IMR-90 (cell line): ENCODE measurements at regions of chr21 and their contacts with region 1.

Region 1: DNA sequence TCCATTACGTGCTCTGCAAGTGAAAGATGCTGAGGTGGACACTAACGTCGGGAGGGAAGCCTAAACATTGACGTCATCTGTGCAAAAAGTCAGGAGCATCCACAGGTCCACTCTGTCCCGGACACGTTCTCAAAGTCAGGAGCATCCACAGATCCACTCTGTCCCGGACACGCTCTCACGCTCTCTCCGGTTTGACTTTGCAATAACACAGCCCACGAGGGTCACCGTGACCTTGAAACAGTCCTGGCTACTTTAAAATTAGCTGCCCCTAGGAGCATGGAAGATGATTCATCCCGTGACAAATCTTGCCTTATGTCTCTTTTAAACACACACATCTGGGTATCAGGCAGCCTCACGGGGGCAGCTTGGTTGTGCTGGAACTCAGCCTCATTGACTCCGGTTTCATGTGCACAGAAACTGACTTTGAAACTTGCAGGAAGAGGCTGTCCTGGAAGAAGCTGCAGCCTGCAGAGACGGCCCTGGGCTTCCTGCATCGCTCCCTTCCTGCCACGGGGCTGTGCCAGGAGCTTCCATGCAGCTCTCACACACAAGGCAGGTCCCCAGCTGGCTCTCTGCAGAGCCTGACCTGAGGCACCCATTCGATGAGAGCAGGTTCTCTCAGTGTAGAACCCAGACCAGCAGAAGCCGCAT is 18.1 kb upstream of the COL18A1 start:
- DNase-seq: peak; percentile 97
- ATAC-seq: peak; percentile 95
- H3K4me3 ChIP-seq: no peak overlapping the region
- H3K27ac ChIP-seq: peak overlapping the region; percentile 57
- H3K4me1 ChIP-seq: peaks cover 18% of the 10 kb centered on the region
- H3K27me3 ChIP-seq: no peaks in the 10 kb centered on the region
- CTCF ChIP-seq: peak; percentile 47
- POLR2A ChIP-seq: peak; percentile 64
- RAD21 ChIP-seq: peak; percentile 47; the same call in 1 of the 2 replicates

Region 2: DNA sequence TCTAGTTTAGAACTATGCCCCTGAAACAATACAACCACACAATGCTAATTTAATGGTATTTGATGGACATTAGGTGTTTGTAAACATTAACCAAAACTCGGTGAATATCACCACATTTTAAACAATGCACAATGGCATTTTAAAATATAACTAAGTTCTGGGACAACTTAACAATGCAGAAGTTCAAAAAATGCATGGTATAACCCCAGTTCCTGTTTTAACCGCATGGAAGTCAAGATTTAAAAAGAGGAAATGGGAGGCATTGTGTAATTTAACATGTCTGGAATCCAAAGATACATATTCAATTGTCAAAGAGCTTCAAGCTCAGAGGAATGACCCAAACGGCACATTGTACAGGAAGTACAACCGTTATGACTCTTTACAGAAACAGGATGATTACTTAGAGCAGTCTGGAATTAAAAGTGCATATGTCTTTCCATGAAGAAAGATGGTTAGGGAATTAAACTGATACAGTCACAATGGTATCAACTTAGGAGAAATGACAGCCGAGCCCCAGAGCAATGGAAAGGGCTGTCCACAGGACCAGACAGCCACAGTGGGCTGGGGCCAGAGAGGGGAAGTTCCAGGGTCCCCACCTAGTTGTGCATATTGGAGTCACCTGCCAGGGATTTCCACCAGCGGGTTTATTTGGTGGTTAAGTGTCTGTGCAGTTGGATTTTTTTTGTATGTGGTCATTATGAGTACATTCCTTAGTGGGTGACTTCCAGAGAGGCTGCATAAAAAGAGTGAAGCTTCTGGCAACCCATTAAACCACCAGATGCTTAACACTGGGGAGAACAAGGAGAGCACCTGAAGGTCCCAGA is 505.9 kb before region 1 on chr21:
- CTCF ChIA-PET with region 1: no interaction called
- POLR2A ChIA-PET with region 1: no interaction called
- dilution Hi-C with region 1: no loop called
- in situ Hi-C with region 1: no loop called
- intact Hi-C with region 1: no loop called
- DNase-seq: peak; percentile 71
- ATAC-seq: peak; percentile 82
- H3K4me3 ChIP-seq: no peak overlapping the region
- H3K27ac ChIP-seq: no peak overlapping the region; the same call in 1 of the 2 replicates
- H3K4me1 ChIP-seq: peaks cover 6% of the 10 kb centered on the region
- H3K27me3 ChIP-seq: peaks cover 3% of the 10 kb centered on the region; the same call in 1 of the 2 replicates
- CTCF ChIP-seq: no peak
- POLR2A ChIP-seq: no peak
- RAD21 ChIP-seq: no peak

Region 3: DNA sequence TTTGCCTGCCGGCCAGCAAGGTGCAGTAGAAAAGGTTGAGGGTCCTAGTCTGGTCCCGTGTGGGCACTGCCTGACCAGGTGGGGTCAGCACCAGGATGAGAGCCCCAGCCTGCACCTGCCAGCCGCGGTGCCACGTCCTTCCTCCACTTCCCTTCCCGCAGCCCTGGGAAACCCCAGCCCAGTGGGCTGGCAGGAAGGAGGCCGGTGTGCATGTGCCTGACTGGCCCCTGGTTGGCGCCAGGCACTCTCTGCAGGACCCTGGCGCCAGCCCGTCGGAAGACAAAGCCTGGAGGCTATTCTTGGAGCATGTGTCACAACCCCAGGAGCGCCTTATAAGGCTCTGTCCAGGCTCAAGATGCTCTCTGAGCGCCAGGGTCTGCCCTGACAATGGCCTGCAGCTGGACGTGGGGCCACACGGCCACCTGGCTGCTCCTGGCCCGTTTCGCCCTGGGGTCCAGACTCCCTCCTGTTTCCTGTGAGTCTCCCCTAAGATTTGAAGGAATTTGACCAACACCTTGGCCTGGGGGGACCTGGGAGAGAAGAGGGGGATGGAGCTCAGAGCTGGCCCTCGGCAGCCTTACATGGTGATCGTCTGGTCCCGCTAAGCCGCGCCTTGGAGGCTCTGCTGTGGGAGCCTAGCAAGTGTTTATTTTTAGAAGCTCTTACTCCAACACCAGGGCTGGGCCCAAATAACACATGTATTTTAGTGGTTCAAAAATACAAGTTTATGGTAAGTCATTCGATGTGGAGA is 67.2 kb before region 1 on chr21:
- CTCF ChIA-PET with region 1: no interaction called
- POLR2A ChIA-PET with region 1: no interaction called
- dilution Hi-C with region 1: no loop called
- in situ Hi-C with region 1: loop called (anchors 10 kb)
- intact Hi-C with region 1: no loop called
- DNase-seq: peak; percentile 77
- ATAC-seq: peak; percentile 44
- H3K4me3 ChIP-seq: no peak overlapping the region
- H3K27ac ChIP-seq: peak overlapping the region; percentile 64
- H3K4me1 ChIP-seq: peaks cover 41% of the 10 kb centered on the region
- H3K27me3 ChIP-seq: no peaks in the 10 kb centered on the region
- CTCF ChIP-seq: no peak
- POLR2A ChIP-seq: no peak
- RAD21 ChIP-seq: no peak

Region 4: DNA sequence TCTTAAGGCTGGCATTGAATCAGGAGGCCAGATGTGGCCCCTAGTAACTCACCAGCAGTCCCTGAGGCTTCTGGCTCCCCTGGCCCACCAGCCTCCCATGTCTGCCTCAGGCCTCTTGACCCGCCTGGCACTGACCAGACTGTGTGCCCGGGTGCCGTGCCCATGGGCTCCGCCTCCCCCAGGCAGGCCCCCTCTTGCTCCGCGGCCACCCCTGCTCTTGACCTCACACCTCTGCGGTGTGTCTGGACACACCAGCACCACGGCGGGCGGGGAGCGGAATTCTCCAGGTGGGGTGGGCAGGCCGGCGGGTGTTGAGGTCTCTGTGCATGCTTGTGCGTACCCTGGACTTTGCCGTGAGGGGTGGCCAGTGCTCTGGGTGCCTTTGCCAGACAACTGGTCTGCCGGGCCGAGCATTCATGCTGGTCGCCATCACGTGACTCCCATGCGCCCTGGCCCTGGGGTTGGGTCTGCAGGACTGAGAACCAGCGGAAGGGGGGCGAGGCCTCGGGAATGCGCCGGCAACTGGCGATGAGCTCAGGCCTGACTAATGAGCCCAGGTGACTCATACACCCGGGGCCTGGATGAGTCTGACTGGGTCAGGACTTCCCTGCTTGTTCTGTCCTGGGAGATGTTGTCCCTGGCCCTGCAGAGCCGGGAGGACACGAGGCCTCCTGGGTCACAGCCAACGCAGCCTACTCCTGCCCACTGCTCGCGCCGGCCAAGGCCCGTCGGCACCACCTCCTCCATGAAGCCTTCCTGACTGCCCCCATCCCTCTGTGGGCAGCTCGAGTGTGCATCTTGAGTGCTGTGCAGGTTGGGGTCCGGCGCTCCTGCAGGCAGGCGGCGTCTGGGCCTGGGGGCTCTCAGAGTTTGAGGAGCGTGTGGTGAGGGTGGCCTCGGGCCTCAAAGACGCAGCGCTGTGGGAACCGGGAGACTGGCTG is 40.8 kb after region 1 on chr21:
- CTCF ChIA-PET with region 1: no interaction called
- POLR2A ChIA-PET with region 1: no interaction called
- dilution Hi-C with region 1: no loop called
- in situ Hi-C with region 1: no loop called
- intact Hi-C with region 1: loop called (anchors 2 kb)
- DNase-seq: peak; percentile 98
- ATAC-seq: peak; percentile 96
- H3K4me3 ChIP-seq: no peak overlapping the region
- H3K27ac ChIP-seq: peak overlapping the region; percentile 58
- H3K4me1 ChIP-seq: peaks cover 32% of the 10 kb centered on the region
- H3K27me3 ChIP-seq: no peaks in the 10 kb centered on the region
- CTCF ChIP-seq: no peak
- POLR2A ChIP-seq: 0 out of 2 replicates have a peak, but pooled peaks have one; percentile 37
- RAD21 ChIP-seq: peak; percentile 34

Region 5: GRCh38 chr21:45439161-45439872 is 52.5 kb after region 1 on chr21:
- CTCF ChIA-PET with region 1: no interaction called
- POLR2A ChIA-PET with region 1: no interaction called
- dilution Hi-C with region 1: no loop called
- in situ Hi-C with region 1: no loop called
- intact Hi-C with region 1: loop called (anchors 2 kb)
- DNase-seq: peak; percentile 89
- ATAC-seq: peak; percentile 92
- H3K4me3 ChIP-seq: peak overlapping the region; percentile 10; the same call in 1 of the 2 replicates
- H3K27ac ChIP-seq: peak overlapping the region; percentile 83
- H3K4me1 ChIP-seq: peaks cover 10% of the 10 kb centered on the region
- H3K27me3 ChIP-seq: no peaks in the 10 kb centered on the region
- CTCF ChIP-seq: peak; percentile 98
- POLR2A ChIP-seq: peak; percentile 68
- RAD21 ChIP-seq: peak; percentile 99